GM13976 (cell line): ENCODE measurements at regions of chr17 and their contacts with region 1.

Region 1: GRCh38 chr17:3740611-3741073 is 16.9 kb downstream of the HASPIN start:
- DNase-seq: peak; percentile 65
- CTCF ChIP-seq: no peak

Region 2: GRCh38 chr17:3683054-3683511 is 57.6 kb before region 1 on chr17:
- in situ Hi-C with region 1: no loop called
- DNase-seq: peak; percentile 88
- CTCF ChIP-seq: peak; percentile 98

Region 3: GRCh38 chr17:3821101-3821500 is 80.5 kb after region 1 on chr17:
- in situ Hi-C with region 1: loop called (anchors 5 kb)
- DNase-seq: no peak
- CTCF ChIP-seq: no peak